ENCODE measurements at regions of chr2 and their contacts with region 1.

Region 1: GRCh38 chr2:24871852-24872323 is 48.1 kb downstream of the ADCY3 start:
- DNase-seq: no peak
- ATAC-seq: no peak
- H3K4me3 ChIP-seq: no peak overlapping the region
- H3K27ac ChIP-seq: no peak overlapping the region
- H3K4me1 ChIP-seq: no peaks in the 10 kb centered on the region
- H3K27me3 ChIP-seq: no peaks in the 10 kb centered on the region
- CTCF ChIP-seq: no peak

Region 2: GRCh38 chr2:24919506-24920097 is 47.7 kb after region 1 on chr2:
- intact Hi-C with region 1: loop called in 1 of 2 experiments (anchors 5 kb)
- DNase-seq: peak; percentile 24 to 58
- ATAC-seq: peak in 3 of 4 donors; percentile 7 to 29 (median 9)
- H3K4me3 ChIP-seq: peak overlapping the region; percentile 73
- H3K27ac ChIP-seq: no peak overlapping the region
- H3K4me1 ChIP-seq: no peaks in the 10 kb centered on the region
- H3K27me3 ChIP-seq: peaks cover 0 to 3% (median 0%) of the 10 kb centered on the region in 3 donors
- CTCF ChIP-seq: no peak

Measured in psoas muscle (tissue), 8 donors.